ENCODE measurements at regions of chr17 and their contacts with region 1.

Region 1: DNA sequence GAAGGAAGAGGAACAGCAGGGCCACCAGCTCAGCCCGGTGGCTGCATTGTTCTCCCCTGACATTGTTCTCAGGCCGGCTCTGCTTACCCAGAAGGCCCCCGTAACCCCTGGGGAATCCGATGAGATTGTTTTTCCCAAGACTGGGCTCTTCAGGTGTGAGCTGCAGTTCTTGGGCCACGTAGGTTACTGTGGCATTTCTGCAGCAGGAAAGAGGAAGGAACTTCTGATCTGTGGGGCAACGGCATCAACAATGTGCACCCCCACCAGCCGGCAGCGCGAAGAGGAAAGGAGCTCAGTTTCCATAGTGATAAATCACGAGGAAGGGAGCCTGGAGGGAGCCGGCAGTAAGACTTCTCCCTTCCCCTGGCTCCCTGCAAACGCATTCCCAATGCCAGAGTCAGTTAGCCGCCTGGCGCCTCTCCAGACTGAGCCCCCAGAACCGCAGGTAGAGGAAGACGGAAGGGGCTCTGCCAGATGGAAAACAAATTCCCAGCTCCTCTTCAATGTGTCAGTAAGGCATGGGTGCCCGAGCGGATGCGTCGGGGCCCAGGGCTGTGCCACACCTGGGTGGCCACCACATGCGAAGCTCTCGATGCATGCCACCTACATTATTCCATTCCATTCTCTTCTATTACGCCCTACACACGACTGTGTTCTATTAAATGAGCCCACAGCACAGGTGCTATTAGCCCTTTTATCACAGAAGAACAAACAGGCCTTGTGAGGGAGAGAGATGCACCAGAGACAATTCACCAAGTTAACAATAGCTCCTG is 21.5 kb upstream of the PECAM1 start:
- DNase-seq: peak in 1 of 2 donors; percentile 20
- H3K4me3 ChIP-seq: no peak overlapping the region
- H3K27ac ChIP-seq: peak overlapping the region in 2 of 3 donors; percentile 4 to 15
- H3K4me1 ChIP-seq: peaks cover 11 to 35% of the 10 kb centered on the region in 2 donors
- H3K27me3 ChIP-seq: no peaks in the 10 kb centered on the region
- CTCF ChIP-seq: no peak
- POLR2A ChIP-seq: no peak

Region 2: DNA sequence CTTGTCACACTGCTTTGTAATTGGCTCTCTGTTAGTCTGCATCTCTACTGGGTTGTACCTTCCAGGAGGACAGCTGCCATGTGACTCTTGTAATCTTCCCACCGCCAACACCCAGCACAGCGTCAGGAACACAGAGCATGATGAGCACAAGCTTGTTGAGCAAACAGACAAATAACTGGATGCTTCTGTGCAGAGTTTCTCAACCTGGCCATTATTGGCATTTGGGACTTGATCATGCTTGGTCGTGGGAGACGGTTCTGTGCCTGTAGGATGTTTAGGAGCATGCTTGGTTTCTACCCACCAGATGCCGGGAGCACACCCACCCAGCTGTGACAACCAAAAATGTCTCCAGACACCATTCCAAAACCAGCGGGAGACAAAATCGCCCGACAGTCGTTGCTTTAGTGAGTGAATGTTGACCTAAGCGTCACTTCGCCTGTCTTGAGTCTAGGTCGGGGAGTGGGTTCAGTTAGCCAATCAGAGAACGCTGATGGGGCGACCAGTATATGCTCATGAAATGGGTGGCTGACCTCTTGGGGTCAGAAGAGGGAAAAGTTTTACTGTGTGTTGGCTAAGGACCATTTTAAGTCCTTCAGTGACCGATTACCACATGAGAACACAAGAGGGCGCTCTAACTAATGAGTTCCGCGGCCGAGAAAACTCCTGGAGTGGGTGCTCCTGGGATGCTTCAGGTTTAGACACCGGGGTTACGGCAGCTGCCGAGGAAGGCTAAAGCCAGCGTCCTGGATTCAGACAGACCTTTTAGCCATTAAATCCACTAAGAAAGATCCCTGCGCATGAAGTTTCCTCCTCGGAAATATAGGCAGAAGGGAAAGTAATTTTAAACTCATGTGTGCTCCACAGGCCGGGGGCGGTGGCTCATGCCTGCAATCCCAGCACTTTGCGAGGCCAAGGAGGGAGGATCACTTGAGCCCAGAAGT is 91.3 kb before region 1 on chr17:
- intact Hi-C with region 1: loop called (anchors 5 kb)
- DNase-seq: peak; percentile 61 to 66
- H3K4me3 ChIP-seq: no peak overlapping the region
- H3K27ac ChIP-seq: peak overlapping the region in 1 of 3 donors; percentile 26
- H3K4me1 ChIP-seq: peaks cover under 1 to 29% of the 10 kb centered on the region in 2 donors
- H3K27me3 ChIP-seq: no peaks in the 10 kb centered on the region
- CTCF ChIP-seq: peak; percentile 63 to 86 (median 77)
- POLR2A ChIP-seq: no peak

Measured in thyroid gland (tissue), 4 donors.